A673 (cell line): ENCODE measurements at regions of chr2 and their contacts with region 1.

Region 1: DNA sequence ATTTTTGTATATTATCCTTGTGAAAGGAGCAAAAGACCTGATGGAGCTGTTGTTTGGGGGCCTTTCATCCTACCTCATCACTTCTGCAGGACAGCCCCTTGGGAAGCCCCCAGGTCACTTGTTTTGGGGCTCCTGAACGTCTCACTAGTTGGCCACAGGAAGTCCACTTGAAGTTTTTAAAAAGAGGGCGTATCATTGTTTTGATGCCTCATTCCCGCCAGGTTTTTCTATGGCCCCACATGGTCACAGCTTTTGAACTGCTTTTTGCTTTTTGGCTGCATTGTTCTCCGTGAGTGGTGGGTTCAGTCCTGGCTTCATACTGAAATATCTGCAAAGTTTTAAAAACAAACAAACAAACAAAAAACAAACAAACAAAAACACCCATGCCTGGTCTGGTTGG is 216.3 kb downstream of the PRKCE start:
- DNase-seq: no peak
- H3K4me3 ChIP-seq: no peak overlapping the region
- H3K27ac ChIP-seq: no peak overlapping the region
- H3K4me1 ChIP-seq: no peaks in the 10 kb centered on the region
- H3K27me3 ChIP-seq: no peaks in the 10 kb centered on the region
- CTCF ChIP-seq: no peak

Region 2: DNA sequence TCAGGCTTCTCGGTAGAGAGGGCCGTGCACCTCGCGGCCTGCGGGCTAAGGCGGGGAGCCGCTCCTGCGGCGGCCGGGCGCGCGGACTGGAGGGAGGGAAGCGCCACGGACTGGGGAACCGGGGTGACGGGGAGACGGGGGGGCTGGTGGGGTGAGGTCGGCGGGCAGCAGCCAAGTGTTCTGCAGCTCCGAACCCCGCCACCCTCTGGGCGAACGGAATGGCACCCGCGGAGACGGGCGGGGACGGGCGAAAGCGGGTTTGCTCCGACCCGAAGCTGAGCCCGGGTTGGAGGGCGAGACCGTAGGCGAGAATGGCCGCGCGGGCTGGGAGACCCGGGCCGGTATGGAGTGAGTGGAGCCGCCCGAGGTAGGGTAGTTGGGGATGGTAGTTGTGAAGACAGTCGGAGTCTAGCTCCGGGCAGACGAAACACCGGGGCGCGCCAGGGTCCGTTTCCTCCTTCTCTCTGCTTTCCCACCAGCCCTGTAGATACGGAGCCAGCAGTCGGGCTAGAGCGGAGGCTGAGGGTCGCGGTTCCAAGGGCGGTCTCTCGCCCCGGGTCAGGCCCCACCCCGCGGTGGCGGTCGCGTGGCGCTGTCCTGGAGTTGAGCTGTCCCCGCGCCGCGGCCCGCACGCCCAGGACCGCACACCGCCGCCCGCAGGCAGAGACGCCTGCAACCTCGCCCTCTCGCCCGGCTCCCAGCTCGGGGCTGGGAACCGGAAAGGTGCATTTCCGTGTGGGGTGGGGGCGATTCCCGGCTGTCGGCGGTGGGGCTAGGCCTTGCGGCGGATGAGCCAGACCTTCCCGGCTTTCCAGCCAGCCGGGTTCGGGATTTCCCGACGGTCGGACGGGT is 698.2 kb before region 1 on chr2:
- CTCF ChIA-PET with region 1: interaction called, 13 read pairs
- POLR2A ChIA-PET with region 1: no interaction called
- intact Hi-C with region 1: no loop called
- DNase-seq: no peak
- H3K4me3 ChIP-seq: peak overlapping the region; percentile 34
- H3K27ac ChIP-seq: no peak overlapping the region
- H3K4me1 ChIP-seq: no peaks in the 10 kb centered on the region
- H3K27me3 ChIP-seq: peaks cover 95% of the 10 kb centered on the region
- CTCF ChIP-seq: no peak